Colonic mucosa (tissue), 4 donors: ENCODE measurements at regions of chr17 and their contacts with region 1.

Region 1: GRCh38 chr17:43483674-43484372 is at the start of gene DHX8:
- DNase-seq: peak; percentile 97
- H3K4me3 ChIP-seq: peak within 1 kb of the TSS; percentile 78
- H3K27ac ChIP-seq: peak within 1 kb of the TSS; percentile 77
- H3K4me1 ChIP-seq: peaks cover 13% of the 10 kb centered on the region
- H3K27me3 ChIP-seq: no peaks in the 10 kb centered on the region
- CTCF ChIP-seq: peak; percentile 100
- total RNA-seq, gene DHX8: 44.5 to 47.6 TPM

Region 2: GRCh38 chr17:43393944-43394482 is 89.8 kb before region 1 on chr17:
- intact Hi-C with region 1: loop called (anchors 1 kb)
- DNase-seq: peak; percentile 96
- H3K4me3 ChIP-seq: no peak overlapping the region
- H3K27ac ChIP-seq: no peak overlapping the region
- H3K4me1 ChIP-seq: no peaks in the 10 kb centered on the region
- H3K27me3 ChIP-seq: no peaks in the 10 kb centered on the region
- CTCF ChIP-seq: peak; percentile 91

Region 3: GRCh38 chr17:43740541-43740940 is 256.7 kb after region 1 on chr17:
- intact Hi-C with region 1: no loop called
- DNase-seq: no peak
- H3K4me3 ChIP-seq: no peak overlapping the region
- H3K27ac ChIP-seq: no peak overlapping the region
- H3K4me1 ChIP-seq: no peaks in the 10 kb centered on the region
- H3K27me3 ChIP-seq: no peaks in the 10 kb centered on the region
- CTCF ChIP-seq: no peak